RWPE1 (cell line): ENCODE measurements at regions of chr4 and their contacts with region 1.

Region 1: GRCh38 chr4:54971474-54971950 is 153.9 kb downstream of the KDR start:
- DNase-seq: peak; percentile 57
- H3K27ac ChIP-seq: no peak overlapping the region
- CTCF ChIP-seq: peak; percentile 89

Region 2: DNA sequence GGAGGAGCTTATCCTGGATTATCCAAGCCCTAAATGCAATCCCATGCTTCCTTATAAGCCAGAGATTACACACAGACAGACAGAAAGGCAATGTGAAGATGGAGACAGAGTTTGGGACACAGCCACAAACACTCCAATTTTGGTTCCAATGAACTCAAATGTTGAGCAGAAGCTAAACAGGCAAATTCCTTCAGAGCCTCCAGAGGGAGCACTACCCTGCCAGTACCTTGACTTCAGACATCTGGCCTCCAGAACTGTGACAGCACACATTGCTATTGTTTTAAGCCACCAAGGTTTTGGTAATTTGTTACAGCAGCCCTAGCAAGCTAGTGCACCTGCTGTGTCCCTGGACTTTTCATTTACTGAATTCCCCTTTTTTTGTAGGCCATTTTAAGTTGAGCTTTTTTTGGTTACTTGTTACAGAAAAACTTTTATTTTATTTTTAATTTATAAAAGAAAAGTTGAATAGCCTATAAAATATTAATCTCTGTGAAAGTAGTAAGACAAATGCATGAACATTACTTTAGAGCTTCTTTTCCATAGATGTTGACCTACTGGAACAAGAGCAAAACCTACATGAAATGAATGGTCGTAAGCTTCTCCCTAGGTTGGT is 341.1 kb after region 1 on chr4:
- CTCF ChIA-PET with region 1: interaction called, 11 read pairs
- POLR2A ChIA-PET with region 1: no interaction called
- DNase-seq: no peak
- H3K27ac ChIP-seq: no peak overlapping the region
- CTCF ChIP-seq: peak; percentile 31; the same call in 1 of the 2 replicates

Region 3: GRCh38 chr4:55321707-55322264 is 350.3 kb after region 1 on chr4:
- CTCF ChIA-PET with region 1: interaction called, 30 read pairs
- POLR2A ChIA-PET with region 1: no interaction called
- DNase-seq: peak; percentile 50
- H3K27ac ChIP-seq: no peak overlapping the region
- CTCF ChIP-seq: peak; percentile 48

Region 4: GRCh38 chr4:55329012-55329411 is 357.5 kb after region 1 on chr4:
- CTCF ChIA-PET with region 1: interaction called, 14 read pairs
- POLR2A ChIA-PET with region 1: no interaction called
- DNase-seq: no peak
- H3K27ac ChIP-seq: no peak overlapping the region
- CTCF ChIP-seq: no peak